IMR-90 (cell line): ENCODE measurements at regions of chr22 and their contacts with region 1.

Region 1: GRCh38 chr22:37457093-37457893 is 28.9 kb downstream of the MFNG start:
- DNase-seq: peak; percentile 48
- ATAC-seq: peak; percentile 73
- H3K4me3 ChIP-seq: no peak overlapping the region
- H3K27ac ChIP-seq: no peak overlapping the region; the same call in 1 of the 2 replicates
- H3K4me1 ChIP-seq: peaks cover 17% of the 10 kb centered on the region
- H3K27me3 ChIP-seq: peaks cover 9% of the 10 kb centered on the region
- CTCF ChIP-seq: peak; percentile 90
- POLR2A ChIP-seq: no peak
- RAD21 ChIP-seq: peak; percentile 97

Region 2: GRCh38 chr22:37077884-37078485 is 379.3 kb before region 1 on chr22:
- CTCF ChIA-PET with region 1: no interaction called
- POLR2A ChIA-PET with region 1: no interaction called
- dilution Hi-C with region 1: no loop called
- in situ Hi-C with region 1: no loop called
- intact Hi-C with region 1: loop called (anchors 5 kb)
- DNase-seq: peak; percentile 37
- ATAC-seq: peak; percentile 86
- H3K4me3 ChIP-seq: no peak overlapping the region
- H3K27ac ChIP-seq: no peak overlapping the region
- H3K4me1 ChIP-seq: no peaks in the 10 kb centered on the region
- H3K27me3 ChIP-seq: peaks cover 42% of the 10 kb centered on the region
- CTCF ChIP-seq: peak; percentile 81
- POLR2A ChIP-seq: no peak
- RAD21 ChIP-seq: peak; percentile 70

Region 3: DNA sequence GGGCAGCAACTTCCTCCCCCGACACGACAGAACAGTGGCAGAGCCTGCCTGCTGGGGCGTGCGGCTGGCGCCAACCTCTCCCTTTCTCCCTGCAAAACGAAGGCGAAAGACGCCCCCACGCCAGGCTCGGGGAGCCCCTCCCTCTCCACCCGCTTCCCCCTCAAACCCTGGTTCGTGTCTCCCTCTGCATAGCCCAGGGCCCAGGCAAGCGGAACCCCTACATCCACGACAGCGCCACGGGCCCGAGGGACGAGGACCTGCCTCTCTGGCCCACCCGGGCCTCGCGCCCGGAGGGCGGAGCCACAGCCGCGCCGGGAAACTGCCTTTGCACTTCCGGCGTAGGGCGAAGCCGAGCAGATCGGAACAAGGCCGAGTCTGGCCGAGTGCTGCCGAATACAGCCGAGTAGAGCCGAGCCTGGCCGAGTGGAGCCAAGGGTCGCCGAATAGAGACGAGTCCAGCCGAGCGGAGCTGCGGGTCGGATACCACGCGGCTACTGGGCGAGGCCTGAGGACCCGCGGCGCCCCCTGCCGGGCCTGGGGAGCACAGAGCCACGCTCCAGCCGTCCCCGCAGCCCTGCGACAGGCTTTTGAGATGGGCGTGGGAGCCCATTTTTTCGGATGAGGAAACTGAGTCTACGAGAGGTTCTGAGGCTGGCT is 258.1 kb before region 1 on chr22:
- CTCF ChIA-PET with region 1: no interaction called
- POLR2A ChIA-PET with region 1: no interaction called
- dilution Hi-C with region 1: no loop called
- in situ Hi-C with region 1: no loop called
- intact Hi-C with region 1: loop called (anchors 1 kb)
- DNase-seq: peak; percentile 96
- ATAC-seq: peak; percentile 98
- H3K4me3 ChIP-seq: peak overlapping the region; percentile 58
- H3K27ac ChIP-seq: peak overlapping the region; percentile 84
- H3K4me1 ChIP-seq: peaks cover 20% of the 10 kb centered on the region
- H3K27me3 ChIP-seq: no peaks in the 10 kb centered on the region
- CTCF ChIP-seq: peak; percentile 95
- POLR2A ChIP-seq: peak; percentile 72; the same call in 1 of the 2 replicates
- RAD21 ChIP-seq: peak; percentile 74

Region 4: GRCh38 chr22:37267135-37267587 is 190.1 kb before region 1 on chr22:
- CTCF ChIA-PET with region 1: no interaction called
- POLR2A ChIA-PET with region 1: no interaction called
- dilution Hi-C with region 1: no loop called
- in situ Hi-C with region 1: no loop called
- intact Hi-C with region 1: loop called (anchors 2 kb)
- DNase-seq: no peak
- ATAC-seq: peak; percentile 96
- H3K4me3 ChIP-seq: peak overlapping the region; percentile 39
- H3K27ac ChIP-seq: peak overlapping the region; percentile 58
- H3K4me1 ChIP-seq: peaks cover 5% of the 10 kb centered on the region
- H3K27me3 ChIP-seq: peaks cover 4% of the 10 kb centered on the region
- CTCF ChIP-seq: peak; percentile 72
- POLR2A ChIP-seq: no peak
- RAD21 ChIP-seq: peak; percentile 74

Region 5: GRCh38 chr22:37316875-37317371 is 140.4 kb before region 1 on chr22:
- CTCF ChIA-PET with region 1: interaction called, 4 read pairs
- POLR2A ChIA-PET with region 1: interaction called, 3 read pairs
- dilution Hi-C with region 1: no loop called
- in situ Hi-C with region 1: loop called (anchors 5 kb)
- intact Hi-C with region 1: loop called (anchors 1 kb)
- DNase-seq: peak; percentile 88
- ATAC-seq: peak; percentile 98
- H3K4me3 ChIP-seq: no peak overlapping the region
- H3K27ac ChIP-seq: no peak overlapping the region
- H3K4me1 ChIP-seq: peaks cover 17% of the 10 kb centered on the region
- H3K27me3 ChIP-seq: no peaks in the 10 kb centered on the region
- CTCF ChIP-seq: peak; percentile 98
- POLR2A ChIP-seq: peak; percentile 68
- RAD21 ChIP-seq: peak; percentile 100

Region 6: DNA sequence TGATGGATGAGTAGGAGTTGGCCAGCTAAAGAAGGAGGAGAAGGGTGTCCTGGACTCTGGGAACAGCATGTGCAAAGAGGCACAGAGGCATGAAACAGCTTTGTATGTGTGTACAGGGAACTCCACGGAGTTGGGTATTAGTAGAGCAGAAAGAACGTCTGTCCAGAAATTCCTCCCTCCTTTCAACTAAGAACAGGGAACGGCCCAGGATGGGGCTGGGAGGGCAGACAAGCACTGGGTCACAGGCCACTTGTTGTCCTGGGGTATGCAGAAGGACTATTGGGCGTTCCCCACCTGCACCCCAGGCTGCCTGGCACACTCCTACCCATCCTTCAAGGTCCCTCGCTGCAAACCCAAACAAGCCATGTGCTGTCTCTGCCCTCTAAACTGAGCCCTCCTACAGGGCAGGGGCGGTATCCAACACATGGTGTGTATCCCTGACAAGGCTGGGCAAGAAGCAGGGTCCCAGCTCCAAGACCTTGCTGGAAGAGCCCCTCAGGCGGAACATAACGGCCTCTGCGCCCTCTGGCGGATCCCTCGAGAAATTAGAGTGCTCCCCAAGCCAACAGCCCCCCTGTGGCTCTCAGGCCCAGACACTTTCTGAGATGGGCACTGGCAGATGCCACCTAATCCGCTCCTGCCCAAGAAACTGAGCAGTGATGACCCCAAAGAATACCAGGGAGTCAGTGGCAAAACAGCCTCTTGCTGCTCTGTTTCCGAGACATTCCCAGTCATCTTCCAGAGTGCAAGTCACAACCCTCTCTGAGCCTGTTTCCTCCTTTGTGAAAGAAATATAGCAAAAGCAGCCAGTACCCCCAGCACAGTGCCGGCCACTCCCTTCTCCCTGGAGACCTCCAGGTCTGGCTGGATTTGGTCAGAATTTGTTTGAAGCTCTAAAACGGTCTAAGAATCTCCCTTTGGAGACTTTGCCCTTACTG is 28.4 kb before region 1 on chr22:
- CTCF ChIA-PET with region 1: interaction called, 3 read pairs
- POLR2A ChIA-PET with region 1: no interaction called
- dilution Hi-C with region 1: no loop called
- in situ Hi-C with region 1: no loop called
- intact Hi-C with region 1: loop called (anchors 1 kb)
- DNase-seq: peak; percentile 43
- ATAC-seq: no peak
- H3K4me3 ChIP-seq: no peak overlapping the region
- H3K27ac ChIP-seq: no peak overlapping the region
- H3K4me1 ChIP-seq: peaks cover 18% of the 10 kb centered on the region
- H3K27me3 ChIP-seq: no peaks in the 10 kb centered on the region
- CTCF ChIP-seq: peak; percentile 65
- POLR2A ChIP-seq: no peak
- RAD21 ChIP-seq: peak; percentile 67